Sciatic nerve (tissue), 2 donors: ENCODE measurements at regions of chr7 and their contacts with region 1.

Region 1: DNA sequence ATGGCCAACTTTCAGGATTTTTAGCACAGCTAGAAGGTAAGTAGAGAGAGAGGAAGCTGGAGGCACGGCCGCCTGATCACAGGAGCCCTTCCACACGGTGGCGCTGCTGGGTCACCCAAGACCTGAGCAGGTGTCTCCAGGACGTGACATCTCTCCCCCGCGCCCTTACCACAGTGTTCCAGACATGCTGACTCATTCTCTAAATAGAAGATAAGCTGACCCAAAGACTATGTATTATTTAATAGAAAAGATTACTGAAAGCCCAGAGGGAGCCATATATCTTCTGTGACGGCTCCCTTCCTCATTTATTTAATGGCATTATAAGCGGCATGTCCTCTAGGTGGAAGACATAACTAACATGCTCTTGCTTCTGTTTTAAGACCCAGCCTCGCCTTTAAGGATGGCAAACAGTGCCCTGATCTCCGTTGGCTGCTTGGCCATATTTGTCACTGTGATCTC is 26.0 kb upstream of the MALSU1 start:
- DNase-seq: peak; percentile 86
- ATAC-seq: peak; percentile 75

Region 2: DNA sequence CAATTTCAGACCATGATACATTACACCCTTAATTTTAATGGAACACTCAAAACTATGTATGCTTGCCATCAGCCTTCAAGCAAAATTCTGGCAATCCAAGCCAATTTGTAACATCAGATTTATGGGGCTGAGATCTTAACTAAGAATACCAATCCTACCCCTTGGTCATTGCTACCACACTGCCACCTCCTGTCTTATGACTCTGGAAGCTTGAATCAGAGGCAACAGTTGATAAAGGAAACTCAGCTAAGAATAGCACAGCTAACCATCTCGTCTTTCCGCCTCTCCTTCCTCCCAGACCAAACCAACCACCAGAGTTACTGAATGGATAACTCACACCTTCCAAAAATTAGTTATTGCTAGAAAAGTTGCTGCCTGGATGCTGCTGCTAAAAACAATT is 189.7 kb after region 1 on chr7:
- intact Hi-C with region 1: loop called (anchors 5 kb)
- DNase-seq: no peak
- ATAC-seq: no peak